A673 (cell line): ENCODE measurements at regions of chr14 and their contacts with region 1.

Region 1: GRCh38 chr14:33792720-33793368 is 158.0 kb downstream of the EGLN3 start:
- DNase-seq: peak; percentile 87
- H3K4me3 ChIP-seq: no peak overlapping the region
- H3K27ac ChIP-seq: no peak overlapping the region
- H3K4me1 ChIP-seq: peaks cover 18% of the 10 kb centered on the region
- H3K27me3 ChIP-seq: no peaks in the 10 kb centered on the region
- CTCF ChIP-seq: peak; percentile 98

Region 2: GRCh38 chr14:32710731-32711680 is 1081.8 kb before region 1 on chr14:
- CTCF ChIA-PET with region 1: interaction called, 9 read pairs
- POLR2A ChIA-PET with region 1: no interaction called
- intact Hi-C with region 1: loop called (anchors 5 kb)
- DNase-seq: peak; percentile 83
- H3K4me3 ChIP-seq: no peak overlapping the region
- H3K27ac ChIP-seq: no peak overlapping the region
- H3K4me1 ChIP-seq: peaks cover 49% of the 10 kb centered on the region
- H3K27me3 ChIP-seq: no peaks in the 10 kb centered on the region
- CTCF ChIP-seq: peak; percentile 74

Region 3: GRCh38 chr14:33271216-33271615 is 521.6 kb before region 1 on chr14:
- CTCF ChIA-PET with region 1: no interaction called
- POLR2A ChIA-PET with region 1: interaction called, 12 read pairs
- intact Hi-C with region 1: no loop called
- DNase-seq: no peak
- H3K4me3 ChIP-seq: no peak overlapping the region
- H3K27ac ChIP-seq: no peak overlapping the region
- H3K4me1 ChIP-seq: peaks cover 25% of the 10 kb centered on the region
- H3K27me3 ChIP-seq: no peaks in the 10 kb centered on the region
- CTCF ChIP-seq: no peak

Region 4: GRCh38 chr14:33420051-33420627 is 372.7 kb before region 1 on chr14:
- CTCF ChIA-PET with region 1: no interaction called
- POLR2A ChIA-PET with region 1: no interaction called
- intact Hi-C with region 1: no loop called
- DNase-seq: no peak
- H3K4me3 ChIP-seq: no peak overlapping the region
- H3K27ac ChIP-seq: no peak overlapping the region
- H3K4me1 ChIP-seq: no peaks in the 10 kb centered on the region
- H3K27me3 ChIP-seq: no peaks in the 10 kb centered on the region
- CTCF ChIP-seq: no peak

Region 5: GRCh38 chr14:33475623-33476022 is 317.2 kb before region 1 on chr14:
- CTCF ChIA-PET with region 1: no interaction called
- POLR2A ChIA-PET with region 1: no interaction called
- intact Hi-C with region 1: loop called (anchors 5 kb)
- DNase-seq: peak; percentile 80
- H3K4me3 ChIP-seq: no peak overlapping the region
- H3K27ac ChIP-seq: no peak overlapping the region
- H3K4me1 ChIP-seq: peaks cover 51% of the 10 kb centered on the region
- H3K27me3 ChIP-seq: no peaks in the 10 kb centered on the region
- CTCF ChIP-seq: peak; percentile 47; the same call in 1 of the 2 replicates